ENCODE measurements at regions of chr12 and their contacts with region 1.

Region 1: GRCh38 chr12:124767066-124767821 is 96.4 kb downstream of the SCARB1 start:
- H3K4me3 Mint-ChIP-seq: no peak overlapping the region
- H3K27ac Mint-ChIP-seq: peak overlapping the region; percentile 64
- H3K4me1 Mint-ChIP-seq: peaks cover 59% of the 10 kb centered on the region
- H3K27me3 Mint-ChIP-seq: peaks cover 10% of the 10 kb centered on the region

Region 2: DNA sequence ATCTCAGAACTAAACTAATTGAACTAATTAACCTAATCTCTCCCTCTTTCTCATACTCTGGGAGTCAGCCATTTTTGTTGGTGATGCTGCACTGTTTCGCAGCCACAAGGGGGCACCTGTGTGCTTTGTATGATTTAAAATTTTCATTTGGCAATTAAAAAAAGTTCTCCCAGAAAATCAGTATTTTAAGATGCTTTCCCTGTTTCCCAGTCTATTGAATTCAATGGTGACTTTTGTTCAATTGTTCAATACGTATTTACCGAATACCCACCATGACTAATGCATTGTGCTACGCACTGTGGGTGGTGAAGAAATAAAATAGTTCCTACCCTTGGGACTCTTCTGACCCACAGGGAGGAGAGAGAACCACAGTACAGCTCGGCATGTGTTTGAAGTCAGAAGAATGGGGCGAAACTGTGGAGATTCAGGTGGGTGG is 730.6 kb before region 1 on chr12:
- intact Hi-C with region 1: loop called (anchors 5 kb)
- H3K4me3 Mint-ChIP-seq: no peak overlapping the region
- H3K27ac Mint-ChIP-seq: no peak overlapping the region
- H3K4me1 Mint-ChIP-seq: peaks cover 10% of the 10 kb centered on the region
- H3K27me3 Mint-ChIP-seq: peaks cover 17% of the 10 kb centered on the region

Region 3: DNA sequence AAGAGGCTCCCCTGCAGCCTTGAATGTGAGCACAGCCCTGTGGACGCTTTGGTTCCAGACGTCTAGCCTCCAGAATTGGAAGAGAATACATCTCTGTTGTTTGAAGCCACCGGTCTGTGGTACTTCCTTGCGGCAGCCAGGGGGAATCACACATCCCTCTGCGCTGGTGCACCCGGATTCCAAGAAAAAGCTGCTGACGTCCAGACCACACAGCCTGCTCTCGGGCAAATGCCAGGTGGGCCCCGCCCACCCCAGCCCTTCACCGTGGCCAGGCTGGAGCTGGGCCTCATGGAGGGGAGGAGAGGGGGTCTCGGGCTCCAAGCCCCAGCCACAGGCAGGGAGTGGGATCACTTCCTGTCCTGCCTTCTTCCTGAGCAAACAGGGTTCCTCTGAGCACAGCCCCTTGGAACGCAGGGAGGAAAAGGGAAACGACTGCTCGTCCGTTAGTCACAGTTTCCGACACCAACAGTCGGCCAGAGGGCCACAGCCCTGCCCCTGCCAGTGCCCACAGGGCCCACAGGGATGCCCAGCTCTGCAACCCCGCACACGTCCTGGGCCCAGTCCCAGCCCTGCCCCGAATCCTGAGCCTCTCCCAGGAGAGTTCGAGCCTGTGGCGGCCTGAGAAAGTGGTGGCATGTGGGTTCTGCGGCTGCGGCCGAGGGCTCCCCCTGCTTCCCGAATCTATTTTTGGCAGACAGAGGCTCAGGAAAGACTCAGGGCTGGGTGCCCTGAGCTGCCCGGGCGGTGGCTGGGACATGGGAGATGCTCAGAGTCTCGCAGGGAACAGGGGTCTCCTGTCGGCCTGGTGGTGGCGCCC is 387.1 kb before region 1 on chr12:
- intact Hi-C with region 1: loop called (anchors 5 kb)
- H3K4me3 Mint-ChIP-seq: peak overlapping the region; percentile 18
- H3K27ac Mint-ChIP-seq: peak overlapping the region; percentile 75
- H3K4me1 Mint-ChIP-seq: peaks cover 72% of the 10 kb centered on the region
- H3K27me3 Mint-ChIP-seq: no peaks in the 10 kb centered on the region

Region 4: GRCh38 chr12:124680863-124681778 is 86.1 kb before region 1 on chr12:
- intact Hi-C with region 1: loop called (anchors 5 kb)
- H3K4me3 Mint-ChIP-seq: peak overlapping the region; percentile 20
- H3K27ac Mint-ChIP-seq: peak overlapping the region; percentile 82
- H3K4me1 Mint-ChIP-seq: peaks cover 81% of the 10 kb centered on the region
- H3K27me3 Mint-ChIP-seq: peaks cover 10% of the 10 kb centered on the region

Region 5: DNA sequence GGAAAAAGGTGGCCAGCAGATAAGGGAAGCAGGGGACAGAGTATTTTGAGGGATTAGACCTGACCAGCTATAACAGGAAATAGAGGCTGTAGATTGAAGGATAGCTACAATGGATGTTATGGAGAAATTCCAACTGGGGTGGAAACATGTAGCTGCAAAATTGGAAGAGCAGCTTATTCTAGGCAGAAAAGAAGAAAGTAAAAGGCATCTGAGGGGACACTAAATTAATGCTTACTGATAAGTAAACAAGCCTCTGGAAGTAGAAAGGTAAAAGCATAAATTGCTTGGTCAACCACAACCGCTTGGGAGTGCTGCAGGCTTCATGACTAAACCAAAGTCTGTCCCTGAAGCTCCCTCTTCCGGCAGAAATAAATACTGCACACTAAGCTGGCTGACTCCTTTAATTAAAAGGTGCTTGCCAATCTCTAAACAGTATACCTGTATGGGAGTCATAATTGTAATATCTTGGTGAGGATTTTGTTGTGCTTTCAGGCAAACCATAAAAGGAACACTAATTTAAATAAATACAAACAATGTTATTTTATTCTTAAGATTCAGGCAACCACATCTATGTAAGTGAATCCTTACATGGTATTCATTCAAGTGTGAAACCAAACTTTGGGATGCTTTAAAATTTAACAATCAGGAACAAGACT is 139.5 kb after region 1 on chr12:
- intact Hi-C with region 1: loop called (anchors 10 kb)
- H3K4me3 Mint-ChIP-seq: no peak overlapping the region
- H3K27ac Mint-ChIP-seq: peak overlapping the region; percentile 71
- H3K4me1 Mint-ChIP-seq: peaks cover 62% of the 10 kb centered on the region
- H3K27me3 Mint-ChIP-seq: no peaks in the 10 kb centered on the region

Region 6: GRCh38 chr12:125149160-125150108 is 382.2 kb after region 1 on chr12:
- intact Hi-C with region 1: no loop called
- H3K4me3 Mint-ChIP-seq: no peak overlapping the region
- H3K27ac Mint-ChIP-seq: no peak overlapping the region
- H3K4me1 Mint-ChIP-seq: no peaks in the 10 kb centered on the region
- H3K27me3 Mint-ChIP-seq: no peaks in the 10 kb centered on the region

Measured in dendritic cell treated with granulocyte-macrophage colony-stimulating factor and Interleukin-4, amounts not matched to agents 40 ng/mL and 50 ng/mL, for 4 days (primary cell).